ENCODE measurements at regions of chr3 and their contacts with region 1.

Region 1: GRCh38 chr3:114666623-114667022 is 372.8 kb downstream of the TIGIT start:
- DNase-seq: no peak
- ATAC-seq: no peak
- H3K4me3 ChIP-seq: no peak overlapping the region
- H3K27ac ChIP-seq: no peak overlapping the region
- H3K4me1 ChIP-seq: peaks cover 0 to 10% (median 0%) of the 10 kb centered on the region in 3 donors
- H3K27me3 ChIP-seq: no peaks in the 10 kb centered on the region
- CTCF ChIP-seq: no peak

Region 2: GRCh38 chr3:114714237-114714636 is 47.6 kb after region 1 on chr3:
- intact Hi-C with region 1: loop called in 1 of 3 experiments (anchors 2 kb)
- DNase-seq: no peak
- ATAC-seq: no peak
- H3K4me3 ChIP-seq: no peak overlapping the region
- H3K27ac ChIP-seq: peak overlapping the region in 2 of 4 donors; percentile 88
- H3K4me1 ChIP-seq: peaks cover 9 to 43% (median 38%) of the 10 kb centered on the region in 3 donors
- H3K27me3 ChIP-seq: no peaks in the 10 kb centered on the region
- CTCF ChIP-seq: no peak

Region 3: GRCh38 chr3:114928989-114929640 is 262.5 kb after region 1 on chr3:
- intact Hi-C with region 1: no loop called
- DNase-seq: no peak
- ATAC-seq: no peak
- H3K4me3 ChIP-seq: no peak overlapping the region
- H3K27ac ChIP-seq: no peak overlapping the region
- H3K4me1 ChIP-seq: no peaks in the 10 kb centered on the region
- H3K27me3 ChIP-seq: no peaks in the 10 kb centered on the region
- CTCF ChIP-seq: no peak